Heart left ventricle (tissue), 16 donors: ENCODE measurements at regions of chr16 and their contacts with region 1.

Region 1: DNA sequence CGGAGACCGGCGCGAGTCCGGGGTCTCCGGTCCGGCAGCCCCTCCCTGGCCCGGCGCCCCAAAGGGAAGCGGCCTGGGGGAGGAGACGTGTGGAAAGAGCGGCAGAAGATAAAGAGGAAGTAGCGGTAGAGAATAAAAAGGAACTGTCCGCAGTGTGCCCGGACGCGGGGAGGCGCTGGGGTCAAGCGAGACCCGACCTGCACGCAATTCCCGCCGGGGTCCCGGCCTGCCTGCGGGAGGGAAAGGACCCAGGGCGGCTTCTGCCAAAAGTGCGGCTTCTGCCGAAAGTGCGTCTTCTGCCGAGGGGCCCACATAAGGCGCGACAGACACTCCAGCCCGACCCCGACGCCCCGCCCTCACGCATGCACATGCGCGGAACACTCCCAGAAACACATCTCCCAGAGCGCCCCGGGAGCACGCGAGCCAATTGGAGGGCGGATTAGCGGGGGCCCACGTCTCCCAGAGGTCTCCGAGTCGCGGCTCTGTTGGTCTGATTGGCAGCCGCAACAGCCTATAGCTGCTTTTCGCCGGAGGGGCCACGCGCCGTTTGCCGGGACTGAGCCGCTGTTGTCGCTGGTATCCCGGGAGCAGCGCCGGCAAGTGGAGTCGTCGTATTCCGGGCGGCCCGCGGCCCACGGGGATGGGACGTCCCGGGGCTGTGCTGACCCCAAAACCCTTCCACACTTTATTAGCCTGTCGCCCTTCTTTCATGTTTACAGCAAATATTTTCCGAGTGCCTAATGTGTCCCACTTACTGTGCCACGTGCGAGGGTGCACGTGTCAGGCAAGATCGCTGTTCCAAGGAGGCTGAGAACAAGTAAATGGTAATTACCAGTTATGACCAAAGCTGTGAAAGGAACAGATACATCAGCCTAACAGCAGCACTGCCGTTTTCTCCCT is 8.0 kb upstream of the MEFV start:
- DNase-seq: peak; percentile 97 to 100 (median 98)
- ATAC-seq: peak; percentile 95 to 97 (median 96)
- H3K4me3 ChIP-seq: peak overlapping the region; percentile 37 to 91 (median 81)
- H3K27ac ChIP-seq: peak overlapping the region; percentile 93 to 100 (median 99)
- H3K4me1 ChIP-seq: peaks cover 0 to 34% (median 9%) of the 10 kb centered on the region in 12 donors
- H3K27me3 ChIP-seq: no peaks in the 10 kb centered on the region
- CTCF ChIP-seq: peak in 8 of 12 donors; percentile 7 to 55 (median 29)
- POLR2A ChIP-seq: peak; percentile 20 to 80

Region 2: GRCh38 chr16:3234543-3235541 is 29.5 kb before region 1 on chr16 and contains the start of gene ZNF200:
- intact Hi-C with region 1: loop called in 2 of 10 experiments (anchors 1 to 2 kb)
- DNase-seq: peak; percentile 97 to 99 (median 98)
- ATAC-seq: peak; percentile 99
- H3K4me3 ChIP-seq: peak within 1 kb of the TSS; percentile 79 to 99 (median 90)
- H3K27ac ChIP-seq: peak within 1 kb of the TSS; percentile 88 to 100 (median 98)
- H3K4me1 ChIP-seq: peaks cover 0 to 18% (median 13%) of the 10 kb centered on the region in 12 donors
- H3K27me3 ChIP-seq: no peaks in the 10 kb centered on the region
- CTCF ChIP-seq: no peak
- POLR2A ChIP-seq: peak in 1 of 2 donors; percentile 75
- total RNA-seq, gene ZNF200: 4.8 to 8.7 (median 6.5) TPM

Region 3: GRCh38 chr16:3305109-3306068 is 41.0 kb after region 1 on chr16 and contains the starts of genes TIGD7 and ZNF75A:
- intact Hi-C with region 1: loop called in 2 of 10 experiments (anchors 1 to 5 kb)
- DNase-seq: peak; percentile 89 to 93 (median 92)
- ATAC-seq: peak; percentile 98 to 100 (median 99)
- H3K4me3 ChIP-seq: peak within 1 kb of the TSS; percentile 52 to 92 (median 73)
- H3K27ac ChIP-seq: peak within 1 kb of the TSS; percentile 74 to 98 (median 94)
- H3K4me1 ChIP-seq: peaks cover 0 to 25% (median 18%) of the 10 kb centered on the region in 12 donors
- H3K27me3 ChIP-seq: no peaks in the 10 kb centered on the region
- CTCF ChIP-seq: peak in 7 of 12 donors; percentile 5 to 45 (median 23)
- POLR2A ChIP-seq: peak in 1 of 2 donors; percentile 80
- total RNA-seq, gene TIGD7: 4.6 to 10.4 (median 8.2) TPM
- total RNA-seq, gene ZNF75A: 13.3 to 27.3 (median 18.1) TPM

Region 4: DNA sequence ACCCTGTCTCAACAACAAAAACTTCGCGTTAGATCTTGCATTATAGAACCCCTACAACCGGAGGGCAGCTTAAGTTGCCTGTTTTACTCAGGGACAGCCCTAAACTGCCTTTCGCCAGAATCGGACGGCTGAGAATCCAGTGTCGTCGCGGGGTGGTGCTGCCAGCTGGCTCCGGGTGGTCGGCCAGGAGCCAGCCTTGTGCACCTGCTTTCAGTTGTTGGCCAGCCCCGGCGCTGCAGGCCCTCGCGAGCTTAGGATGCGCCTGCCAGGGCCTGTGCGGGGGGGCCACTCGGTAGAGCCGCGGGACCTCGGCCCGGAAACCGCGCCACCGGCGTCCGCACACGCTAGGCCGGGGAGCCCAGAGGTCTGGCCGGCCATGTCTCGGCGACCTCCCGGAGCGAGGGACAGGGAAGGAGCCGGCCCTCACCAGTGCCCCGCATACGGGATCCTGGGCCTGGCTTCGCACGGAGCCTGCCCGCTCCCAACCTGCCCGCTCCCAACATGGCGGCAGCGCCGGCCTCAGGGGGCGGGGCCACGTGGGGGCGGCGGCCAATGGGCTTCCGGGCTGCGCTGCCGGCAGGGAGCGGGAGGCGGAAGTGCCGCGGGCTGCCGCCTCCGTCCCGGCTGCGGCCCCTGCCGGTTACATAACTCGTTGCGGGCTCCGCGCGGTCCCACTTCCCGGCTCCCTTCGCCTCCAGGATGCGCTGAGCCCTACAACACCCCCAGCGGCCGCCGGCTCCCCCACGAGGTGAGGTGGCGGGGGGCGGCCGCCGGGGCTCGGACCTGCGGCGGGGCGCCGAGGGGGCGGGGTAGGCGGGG is 193.3 kb after region 1 on chr16:
- intact Hi-C with region 1: loop called in 3 of 10 experiments (anchors 2 to 10 kb)
- DNase-seq: peak; percentile 91 to 95 (median 93)
- ATAC-seq: peak; percentile 69 to 94 (median 90)
- H3K4me3 ChIP-seq: peak overlapping the region; percentile 74 to 99 (median 80)
- H3K27ac ChIP-seq: peak overlapping the region; percentile 94 to 99 (median 98)
- H3K4me1 ChIP-seq: peaks cover 16 to 64% (median 57%) of the 10 kb centered on the region in 12 donors
- H3K27me3 ChIP-seq: no peaks in the 10 kb centered on the region
- CTCF ChIP-seq: peak in 11 of 12 donors; percentile 24 to 64 (median 50)
- POLR2A ChIP-seq: peak in 1 of 2 donors; percentile 56

Region 5: GRCh38 chr16:3503523-3503922 is 239.1 kb after region 1 on chr16:
- intact Hi-C with region 1: loop called in 7 of 10 experiments (anchors 5 to 10 kb)
- DNase-seq: no peak
- ATAC-seq: no peak
- H3K4me3 ChIP-seq: no peak overlapping the region
- H3K27ac ChIP-seq: peak overlapping the region in 1 of 12 donors; percentile 74
- H3K4me1 ChIP-seq: peaks cover 4 to 37% (median 14%) of the 10 kb centered on the region in 12 donors
- H3K27me3 ChIP-seq: no peaks in the 10 kb centered on the region
- CTCF ChIP-seq: no peak
- POLR2A ChIP-seq: no peak